Gastrocnemius medialis (tissue), 4 donors: ENCODE measurements at regions of chr4 and their contacts with region 1.

Region 1: GRCh38 chr4:105135785-105136184 is 10.9 kb upstream of the TET2 start:
- DNase-seq: no peak
- ATAC-seq: no peak
- H3K4me3 ChIP-seq: no peak overlapping the region
- H3K27ac ChIP-seq: no peak overlapping the region
- H3K4me1 ChIP-seq: no peaks in the 10 kb centered on the region
- H3K27me3 ChIP-seq: no peaks in the 10 kb centered on the region
- CTCF ChIP-seq: no peak
- POLR2A ChIP-seq: no peak

Region 2: DNA sequence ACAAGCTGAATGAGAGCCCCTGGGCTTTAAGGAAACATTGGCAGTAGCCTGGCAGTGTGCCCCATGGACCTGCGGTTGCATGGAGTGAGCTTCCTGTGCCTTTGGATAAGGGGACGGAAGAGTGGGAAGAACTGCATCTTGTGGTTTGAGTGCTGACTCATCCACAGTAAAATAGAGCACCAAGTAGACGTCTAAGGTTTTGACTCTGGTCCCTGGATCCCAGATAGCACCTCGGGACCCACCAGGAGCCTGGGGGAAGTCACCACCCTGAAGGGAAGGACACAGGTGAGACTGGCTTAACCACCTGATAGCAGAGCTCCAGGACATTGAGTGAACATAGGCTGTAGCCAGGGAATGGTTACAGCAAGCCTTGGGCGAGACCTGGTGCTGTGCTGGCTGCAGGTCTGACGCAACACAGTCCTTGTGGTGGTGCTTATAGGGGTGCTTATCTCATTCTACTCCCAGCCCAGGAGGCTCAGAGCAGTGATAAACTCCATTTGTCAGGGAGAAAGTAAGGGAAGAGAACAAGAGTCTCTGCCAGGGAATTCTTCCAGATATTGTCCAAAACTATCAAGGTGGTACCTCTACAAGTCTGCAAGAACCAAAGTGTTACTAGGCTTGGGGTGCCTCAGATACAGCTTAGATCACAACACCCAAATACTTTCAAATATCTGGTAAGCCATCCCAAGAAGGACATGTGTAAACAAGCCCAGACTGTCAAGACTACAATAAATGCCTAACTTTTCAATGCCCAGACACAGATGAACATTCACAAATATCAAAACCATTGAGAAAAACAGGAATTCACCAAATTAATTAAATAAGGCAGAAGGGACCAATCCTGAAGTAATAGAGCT is 112.7 kb before region 1 on chr4:
- in situ Hi-C with region 1: no loop called
- intact Hi-C with region 1: no loop called
- DNase-seq: no peak
- ATAC-seq: no peak
- H3K4me3 ChIP-seq: no peak overlapping the region
- H3K27ac ChIP-seq: no peak overlapping the region
- H3K4me1 ChIP-seq: no peaks in the 10 kb centered on the region
- H3K27me3 ChIP-seq: no peaks in the 10 kb centered on the region
- CTCF ChIP-seq: no peak
- POLR2A ChIP-seq: no peak

Region 3: DNA sequence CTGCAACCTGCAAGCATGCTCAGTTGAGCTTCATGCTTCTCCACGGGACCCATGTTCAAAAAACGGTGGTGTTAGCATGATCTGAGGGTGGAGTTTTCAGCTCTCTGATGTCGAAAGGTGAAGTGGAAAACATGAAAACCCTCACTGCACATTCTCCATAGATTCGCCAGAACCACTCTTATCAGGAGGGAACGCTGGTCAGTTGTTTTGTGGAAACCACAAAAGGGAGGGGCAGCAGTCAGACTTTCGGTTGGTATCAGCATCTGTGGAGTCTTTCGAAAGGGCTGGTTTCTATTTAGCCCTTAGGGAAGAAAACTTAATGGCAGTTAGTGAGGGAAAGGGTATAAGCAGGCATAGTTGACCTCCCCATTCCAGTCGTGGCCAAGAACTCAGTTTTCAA is 325.4 kb after region 1 on chr4:
- in situ Hi-C with region 1: loop called in 1 of 4 experiments (anchors 10 kb)
- intact Hi-C with region 1: no loop called
- DNase-seq: no peak
- ATAC-seq: no peak
- H3K4me3 ChIP-seq: no peak overlapping the region
- H3K27ac ChIP-seq: no peak overlapping the region
- H3K4me1 ChIP-seq: peaks cover 5% of the 10 kb centered on the region in 2 donors
- H3K27me3 ChIP-seq: no peaks in the 10 kb centered on the region
- CTCF ChIP-seq: no peak
- POLR2A ChIP-seq: no peak